ENCODE measurements at regions of chr11 and their contacts with region 1.

Region 1: GRCh38 chr11:95067039-95067840 is 521 bp downstream of the SRSF8 start:
- H3K4me3 ChIP-seq: peak overlapping the region; percentile 79
- H3K27ac ChIP-seq: peak overlapping the region; percentile 86
- H3K4me1 ChIP-seq: no peaks in the 10 kb centered on the region
- CTCF ChIP-seq: peak; percentile 92

Region 2: GRCh38 chr11:95055283-95055897 is 11.8 kb before region 1 on chr11:
- CTCF ChIA-PET with region 1: interaction called, 14 read pairs
- POLR2A ChIA-PET with region 1: interaction called, 3 read pairs
- H3K4me3 ChIP-seq: no peak overlapping the region
- H3K27ac ChIP-seq: no peak overlapping the region
- H3K4me1 ChIP-seq: no peaks in the 10 kb centered on the region
- CTCF ChIP-seq: no peak

Region 3: DNA sequence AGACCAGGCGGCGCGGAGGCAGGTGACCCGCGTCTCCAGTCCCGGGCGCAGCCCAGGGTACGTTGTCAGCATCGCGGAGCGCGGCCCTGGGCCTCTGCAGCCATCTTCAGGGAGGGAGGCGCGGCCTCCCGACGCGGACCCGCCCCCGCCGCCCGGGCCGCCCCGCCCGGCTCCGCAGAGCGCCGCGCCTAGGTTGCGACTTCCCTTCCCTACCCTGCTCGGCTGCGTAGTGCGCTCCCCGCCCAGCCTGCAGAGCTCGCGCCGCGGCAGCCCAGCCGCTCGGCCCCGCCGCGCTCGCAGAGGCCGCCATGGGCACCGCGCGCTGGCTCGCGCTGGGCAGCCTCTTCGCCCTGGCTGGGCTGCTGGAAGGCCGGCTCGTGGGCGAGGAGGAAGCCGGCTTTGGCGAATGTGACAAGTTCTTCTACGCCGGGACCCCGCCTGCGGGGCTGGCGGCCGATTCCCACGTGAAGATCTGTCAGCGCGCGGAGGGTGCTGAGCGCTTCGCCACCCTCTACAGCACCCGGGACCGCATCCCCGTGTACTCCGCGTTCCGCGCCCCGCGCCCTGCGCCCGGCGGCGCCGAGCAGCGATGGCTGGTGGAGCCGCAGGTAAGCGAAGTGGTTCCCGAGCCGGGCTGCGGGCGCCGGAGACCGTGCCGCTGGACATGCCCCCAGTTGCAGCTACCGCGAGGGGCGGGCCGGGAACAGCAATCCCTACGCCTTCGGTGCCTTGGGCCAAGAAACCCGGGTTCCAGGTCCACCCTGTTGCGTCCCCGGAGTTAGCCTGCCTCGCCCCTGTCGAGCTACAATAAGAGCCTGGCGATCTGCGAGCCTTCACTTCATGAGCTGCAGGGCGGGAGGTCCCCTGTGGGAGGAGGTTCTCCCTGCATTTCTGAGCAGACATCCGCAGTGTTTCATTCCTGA is 22.6 kb after region 1 on chr11 and contains the start of gene ENDOD1:
- CTCF ChIA-PET with region 1: interaction called, 63 read pairs
- POLR2A ChIA-PET with region 1: interaction called, 28 read pairs
- H3K4me3 ChIP-seq: peak within 1 kb of the TSS; percentile 55
- H3K27ac ChIP-seq: peak within 1 kb of the TSS; percentile 21; the same call in 1 of the 2 replicates
- H3K4me1 ChIP-seq: no peaks in the 10 kb centered on the region
- CTCF ChIP-seq: peak; percentile 72

Region 4: DNA sequence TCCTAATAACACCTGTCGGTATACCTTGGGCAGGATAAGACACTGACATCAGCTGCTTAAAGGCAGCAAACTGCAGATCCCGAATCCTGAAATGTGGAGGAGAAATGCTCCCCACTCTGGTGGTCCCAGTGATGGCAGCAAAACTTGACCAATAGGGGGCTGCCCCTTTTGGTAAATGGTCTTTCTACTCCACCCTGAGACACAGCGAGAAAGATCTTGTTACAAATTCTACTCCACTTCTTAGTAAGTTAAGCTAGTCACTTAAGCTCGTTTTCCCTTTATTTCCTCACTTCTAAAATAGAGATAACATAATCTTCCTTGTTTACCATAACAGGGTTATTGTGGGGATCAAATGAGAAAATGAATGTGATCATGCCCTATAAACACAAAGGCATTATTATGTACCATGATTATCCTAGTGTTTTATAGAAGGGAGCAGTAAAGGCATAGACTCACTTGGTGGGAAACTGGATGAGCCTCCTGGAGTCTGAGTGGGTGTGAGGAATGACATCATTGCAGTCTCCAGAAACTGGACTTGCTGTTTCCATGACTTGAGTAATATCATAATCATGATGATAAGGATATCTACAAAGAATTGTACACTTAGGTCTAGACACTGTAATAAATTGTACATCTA is 73.3 kb after region 1 on chr11:
- CTCF ChIA-PET with region 1: interaction called, 12 read pairs
- POLR2A ChIA-PET with region 1: interaction called, 4 read pairs
- H3K4me3 ChIP-seq: no peak overlapping the region
- H3K27ac ChIP-seq: no peak overlapping the region
- H3K4me1 ChIP-seq: no peaks in the 10 kb centered on the region
- CTCF ChIP-seq: no peak

Region 5: GRCh38 chr11:95790123-95790932 is 723.1 kb after region 1 on chr11 and contains the start of gene CEP57:
- CTCF ChIA-PET with region 1: no interaction called
- POLR2A ChIA-PET with region 1: interaction called, 16 read pairs
- H3K4me3 ChIP-seq: peak within 1 kb of the TSS; percentile 99
- H3K27ac ChIP-seq: peak within 1 kb of the TSS; percentile 80
- H3K4me1 ChIP-seq: no peaks in the 10 kb centered on the region
- CTCF ChIP-seq: no peak

Measured in HEK293 (cell line).